PC-9 (cell line): ENCODE measurements at regions of chr16 and their contacts with region 1.

Region 1: GRCh38 chr16:30644334-30644830 is 6.4 kb upstream of the PRR14 start:
- DNase-seq: no peak
- H3K4me3 ChIP-seq: no peak overlapping the region
- H3K27ac ChIP-seq: no peak overlapping the region
- H3K4me1 ChIP-seq: no peaks in the 10 kb centered on the region
- H3K27me3 ChIP-seq: no peaks in the 10 kb centered on the region
- CTCF ChIP-seq: no peak

Region 2: GRCh38 chr16:30395155-30395991 is 249.0 kb before region 1 on chr16 and contains the start of gene ZNF48:
- CTCF ChIA-PET with region 1: no interaction called
- POLR2A ChIA-PET with region 1: interaction called, 10 read pairs
- intact Hi-C with region 1: no loop called
- DNase-seq: peak; percentile 72 to 93
- H3K4me3 ChIP-seq: peak within 1 kb of the TSS; percentile 98
- H3K27ac ChIP-seq: peak within 1 kb of the TSS; percentile 68
- H3K4me1 ChIP-seq: peaks cover 19% of the 10 kb centered on the region
- H3K27me3 ChIP-seq: no peaks in the 10 kb centered on the region
- CTCF ChIP-seq: no peak; the same call in 1 of the 2 replicates
- total RNA-seq, gene ZNF48: 20.1 and 25.9 TPM in 2 replicates

Region 3: DNA sequence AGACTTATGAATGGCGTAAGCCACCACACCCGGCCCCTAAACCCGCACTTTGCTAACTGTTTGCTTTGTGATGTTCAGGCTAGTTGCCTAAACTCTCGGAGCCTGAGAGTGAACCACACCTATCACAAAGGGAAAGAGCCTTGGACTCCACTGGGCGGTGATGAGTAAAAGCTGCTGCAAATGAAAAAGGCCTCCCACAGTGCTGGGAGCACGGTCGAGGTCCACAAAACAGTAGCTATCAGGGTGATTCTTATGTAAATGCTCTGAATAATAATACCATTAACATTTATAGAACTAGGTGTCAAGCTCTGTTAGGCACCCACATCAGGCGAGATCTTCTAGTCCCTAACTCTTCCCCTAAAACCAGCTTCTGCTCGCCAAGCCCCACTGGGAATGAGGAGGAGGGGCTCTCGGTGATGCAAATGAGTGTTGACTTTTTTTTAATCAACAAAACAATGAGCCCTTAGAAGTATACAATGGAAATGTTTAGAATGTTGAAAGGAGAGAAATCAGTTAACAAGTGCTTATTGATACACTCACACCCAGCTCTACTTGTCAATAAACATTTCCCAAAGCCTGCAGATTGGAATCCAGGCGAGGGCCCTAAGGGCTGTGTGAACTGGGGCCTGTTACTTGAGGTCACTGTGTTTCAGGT is 33.7 kb after region 1 on chr16:
- CTCF ChIA-PET with region 1: no interaction called
- POLR2A ChIA-PET with region 1: interaction called, 16 read pairs
- intact Hi-C with region 1: no loop called
- DNase-seq: no peak
- H3K4me3 ChIP-seq: no peak overlapping the region
- H3K27ac ChIP-seq: no peak overlapping the region
- H3K4me1 ChIP-seq: no peaks in the 10 kb centered on the region
- H3K27me3 ChIP-seq: no peaks in the 10 kb centered on the region
- CTCF ChIP-seq: no peak

Region 4: GRCh38 chr16:31286421-31287032 is 642.1 kb after region 1 on chr16:
- CTCF ChIA-PET with region 1: no interaction called
- POLR2A ChIA-PET with region 1: no interaction called
- intact Hi-C with region 1: no loop called
- DNase-seq: no peak
- H3K4me3 ChIP-seq: no peak overlapping the region
- H3K27ac ChIP-seq: no peak overlapping the region
- H3K4me1 ChIP-seq: no peaks in the 10 kb centered on the region
- H3K27me3 ChIP-seq: peaks cover 6% of the 10 kb centered on the region; the same call in 1 of the 2 replicates
- CTCF ChIP-seq: no peak